AG04449 (cell line): ENCODE measurements at regions of chr15 and their contacts with region 1.

Region 1: DNA sequence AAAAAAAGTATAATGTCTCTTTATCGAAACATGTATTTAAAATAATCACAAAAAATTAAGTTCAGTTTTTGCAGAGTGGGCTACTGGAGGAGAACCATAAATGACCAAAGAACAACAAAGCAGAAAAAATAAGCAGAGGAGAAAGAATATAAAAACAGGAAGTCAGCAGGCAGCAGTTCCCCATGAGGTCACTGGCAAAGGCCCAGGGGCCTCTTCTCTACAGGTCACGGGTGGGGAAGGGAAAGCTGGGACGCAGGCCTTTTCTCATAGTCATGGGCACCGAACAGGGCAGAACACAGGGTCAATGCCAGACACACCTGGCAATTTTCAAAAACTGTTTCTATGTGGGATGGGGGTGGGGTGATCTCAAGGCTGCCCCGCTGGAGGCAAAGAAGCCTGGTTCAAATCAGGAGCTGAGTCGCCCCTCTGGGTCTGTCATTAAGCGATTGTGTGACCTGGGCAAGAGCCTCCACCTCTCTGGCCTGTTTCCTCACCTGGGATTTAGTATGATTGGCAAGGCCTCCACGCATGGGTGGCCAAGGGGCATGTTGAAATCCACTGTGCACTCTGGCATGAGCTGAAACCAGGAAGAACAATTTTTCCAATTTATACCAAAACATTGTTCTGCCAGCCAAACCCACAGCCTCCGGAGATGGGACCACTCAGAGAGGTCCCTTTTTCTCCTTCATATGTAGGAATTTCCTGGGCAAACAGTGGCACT is 43.8 kb upstream of the UACA start:
- DNase-seq: no peak
- H3K4me3 ChIP-seq: no peak overlapping the region
- CTCF ChIP-seq: no peak

Region 2: GRCh38 chr15:70679919-70680231 is 127.3 kb before region 1 on chr15:
- CTCF ChIA-PET with region 1: interaction called, 203 read pairs
- POLR2A ChIA-PET with region 1: no interaction called
- DNase-seq: no peak
- H3K4me3 ChIP-seq: no peak overlapping the region
- CTCF ChIP-seq: no peak

Region 3: GRCh38 chr15:70722266-70723121 is 84.7 kb before region 1 on chr15:
- CTCF ChIA-PET with region 1: interaction called, 105 read pairs
- POLR2A ChIA-PET with region 1: no interaction called
- DNase-seq: no peak
- H3K4me3 ChIP-seq: no peak overlapping the region
- CTCF ChIP-seq: peak; percentile 42

Region 4: GRCh38 chr15:70754862-70755261 is 52.3 kb before region 1 on chr15:
- CTCF ChIA-PET with region 1: interaction called, 34 read pairs
- POLR2A ChIA-PET with region 1: no interaction called
- DNase-seq: no peak
- H3K4me3 ChIP-seq: no peak overlapping the region
- CTCF ChIP-seq: no peak

Region 5: DNA sequence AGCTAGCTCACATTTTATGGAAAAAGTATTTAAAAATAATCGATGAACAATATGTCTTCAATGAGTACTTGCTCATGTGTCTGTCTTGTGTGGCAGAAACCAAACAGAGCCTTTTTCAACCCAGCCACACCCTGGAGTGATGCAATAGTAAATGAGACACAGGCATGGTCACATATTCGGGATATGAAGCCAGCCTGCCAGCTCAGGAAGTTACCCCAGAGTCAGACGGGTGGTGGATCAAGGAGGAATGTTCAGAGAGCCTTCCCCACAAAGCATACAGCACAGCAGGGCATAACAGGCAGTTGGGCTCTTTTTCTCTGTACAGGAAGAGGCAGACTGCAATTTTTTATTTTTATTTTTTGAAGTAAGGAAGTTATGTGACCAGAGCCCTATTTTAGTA is 19.5 kb after region 1 on chr15:
- CTCF ChIA-PET with region 1: interaction called, 110 read pairs
- POLR2A ChIA-PET with region 1: no interaction called
- DNase-seq: peak; percentile 66
- H3K4me3 ChIP-seq: no peak overlapping the region
- CTCF ChIP-seq: no peak

Region 6: GRCh38 chr15:70870051-70870450 is 62.9 kb after region 1 on chr15:
- CTCF ChIA-PET with region 1: interaction called, 24 read pairs
- POLR2A ChIA-PET with region 1: interaction called, 4 read pairs
- DNase-seq: no peak
- H3K4me3 ChIP-seq: no peak overlapping the region
- CTCF ChIP-seq: no peak

Region 7: DNA sequence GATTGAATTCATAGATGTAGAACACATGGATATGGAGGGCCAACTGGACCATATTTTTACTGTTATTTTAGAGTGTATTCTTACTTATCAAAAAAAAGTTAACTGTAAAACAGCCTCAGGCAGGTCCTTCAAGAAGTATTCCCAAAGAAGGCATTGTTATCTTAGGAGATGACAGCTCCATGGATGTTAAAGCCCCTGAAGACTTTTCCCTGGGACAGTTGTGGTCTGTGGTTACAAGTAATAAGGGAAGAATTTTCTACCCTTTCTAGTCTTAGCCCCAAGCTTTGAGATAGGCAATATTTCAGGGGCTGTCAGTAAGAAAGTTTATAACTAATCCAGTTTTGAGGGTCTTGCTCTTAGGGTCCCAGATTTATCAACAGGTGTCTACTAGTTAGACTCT is 148.0 kb after region 1 on chr15:
- CTCF ChIA-PET with region 1: no interaction called
- POLR2A ChIA-PET with region 1: no interaction called
- DNase-seq: no peak
- H3K4me3 ChIP-seq: no peak overlapping the region
- CTCF ChIP-seq: no peak

Region 8: DNA sequence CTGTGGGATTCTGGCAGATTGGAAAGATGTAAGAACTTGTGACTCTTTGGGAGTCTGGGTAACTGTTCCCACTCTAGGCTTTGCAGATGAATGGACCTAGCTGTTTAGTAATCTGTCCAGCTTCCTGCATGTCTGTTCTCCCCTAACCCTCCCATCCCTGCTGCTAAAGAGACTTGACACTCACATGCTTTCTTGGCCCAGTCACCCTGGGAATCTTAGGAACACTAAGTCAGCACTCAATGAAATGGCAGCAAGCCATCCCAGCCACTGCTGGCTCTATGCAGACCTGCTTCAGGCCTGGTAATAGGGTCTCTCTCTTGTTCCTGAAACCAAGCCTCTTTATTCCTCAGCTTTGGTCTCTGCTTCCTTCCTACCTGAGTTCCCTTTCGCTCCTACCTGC is 244.4 kb after region 1 on chr15:
- CTCF ChIA-PET with region 1: no interaction called
- POLR2A ChIA-PET with region 1: no interaction called
- DNase-seq: peak; percentile 82
- H3K4me3 ChIP-seq: no peak overlapping the region
- CTCF ChIP-seq: no peak